ENCODE measurements at regions of chr5 and their contacts with region 1.

Region 1: DNA sequence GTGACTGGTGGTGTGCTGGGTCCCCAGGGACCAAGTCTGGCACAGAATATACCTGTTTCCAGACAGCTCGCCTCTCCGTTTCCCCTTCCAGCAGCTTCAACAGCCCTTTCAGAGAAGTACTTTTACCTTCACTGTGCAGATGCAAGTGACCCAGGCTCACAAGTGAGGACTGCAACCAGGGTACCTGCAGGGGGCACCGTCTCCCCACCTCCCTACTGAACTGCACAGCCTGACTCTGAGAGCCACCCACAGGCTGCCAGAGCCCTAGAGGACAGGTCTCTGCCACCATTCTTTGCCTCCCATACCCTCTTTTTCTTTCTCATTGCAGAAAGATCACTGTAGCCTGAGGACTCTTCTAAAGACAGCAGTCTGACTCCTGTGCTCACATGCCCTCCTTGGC is 15.4 kb downstream of the IL9 start:
- DNase-seq: no peak

Region 2: GRCh38 chr5:135862744-135863143 is 17.5 kb before region 1 on chr5:
- intact Hi-C with region 1: loop called (anchors 1 kb)
- DNase-seq: no peak